ENCODE measurements at regions of chr6 and their contacts with region 1.

Region 1: GRCh38 chr6:111322153-111322552 is 160.9 kb downstream of the REV3L start:
- DNase-seq: no peak
- H3K4me3 ChIP-seq: no peak overlapping the region
- H3K4me3 Mint-ChIP-seq: no peak overlapping the region
- H3K27ac Mint-ChIP-seq: no peak overlapping the region
- H3K4me1 ChIP-seq: no peaks in the 10 kb centered on the region
- H3K4me1 Mint-ChIP-seq: no peaks in the 10 kb centered on the region
- H3K27me3 ChIP-seq: no peaks in the 10 kb centered on the region
- H3K27me3 Mint-ChIP-seq: no peaks in the 10 kb centered on the region
- CTCF ChIP-seq: no peak

Region 2: DNA sequence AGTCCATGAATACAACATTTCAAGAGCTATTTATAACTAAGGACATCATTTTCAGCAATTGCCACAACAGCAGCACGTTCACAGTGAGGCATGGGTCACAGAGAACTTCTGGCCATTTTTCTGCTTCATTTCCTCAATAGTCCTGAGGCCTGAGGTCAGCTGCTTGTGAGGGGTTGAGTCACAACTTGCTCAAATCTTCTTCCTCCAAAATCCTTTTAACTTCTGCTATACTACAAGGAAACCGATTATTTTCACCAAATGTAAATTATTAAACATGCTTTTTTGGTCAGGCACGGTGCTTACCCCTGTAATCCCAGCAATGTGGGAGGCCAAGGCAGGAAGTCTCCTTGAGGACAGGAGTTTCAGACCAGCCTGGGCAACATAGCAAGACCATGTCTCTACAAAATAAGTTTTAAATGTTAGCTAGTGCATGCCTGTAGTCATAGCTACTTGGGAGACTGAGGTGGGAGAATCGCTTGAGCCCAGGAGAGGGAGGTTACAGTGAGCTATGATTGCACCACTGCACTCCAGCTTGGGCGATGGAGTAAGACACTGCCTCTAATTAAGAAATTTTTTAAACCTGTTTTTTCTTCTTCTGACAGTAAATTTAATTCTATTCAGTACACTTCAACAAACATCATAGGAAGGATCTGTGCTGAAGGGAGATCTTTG is 246.0 kb before region 1 on chr6:
- CTCF ChIA-PET with region 1: no interaction called
- POLR2A ChIA-PET with region 1: interaction called, 10 read pairs
- intact Hi-C with region 1: no loop called
- DNase-seq: no peak
- H3K4me3 ChIP-seq: no peak overlapping the region
- H3K4me3 Mint-ChIP-seq: no peak overlapping the region
- H3K27ac Mint-ChIP-seq: no peak overlapping the region
- H3K4me1 ChIP-seq: no peaks in the 10 kb centered on the region
- H3K4me1 Mint-ChIP-seq: no peaks in the 10 kb centered on the region
- H3K27me3 ChIP-seq: no peaks in the 10 kb centered on the region; the same call in 1 of the 2 replicates
- H3K27me3 Mint-ChIP-seq: peaks cover 3% of the 10 kb centered on the region
- CTCF ChIP-seq: no peak

Region 3: GRCh38 chr6:111276338-111277119 is 45.6 kb before region 1 on chr6:
- CTCF ChIA-PET with region 1: no interaction called
- POLR2A ChIA-PET with region 1: no interaction called
- intact Hi-C with region 1: no loop called
- DNase-seq: peak; percentile 83 to 87
- H3K4me3 ChIP-seq: no peak overlapping the region
- H3K4me3 Mint-ChIP-seq: peak overlapping the region; percentile 70
- H3K27ac Mint-ChIP-seq: peak overlapping the region; percentile 92
- H3K4me1 ChIP-seq: peaks cover 43% of the 10 kb centered on the region
- H3K4me1 Mint-ChIP-seq: peaks cover 47% of the 10 kb centered on the region
- H3K27me3 ChIP-seq: no peaks in the 10 kb centered on the region
- H3K27me3 Mint-ChIP-seq: no peaks in the 10 kb centered on the region
- CTCF ChIP-seq: no peak

Region 4: DNA sequence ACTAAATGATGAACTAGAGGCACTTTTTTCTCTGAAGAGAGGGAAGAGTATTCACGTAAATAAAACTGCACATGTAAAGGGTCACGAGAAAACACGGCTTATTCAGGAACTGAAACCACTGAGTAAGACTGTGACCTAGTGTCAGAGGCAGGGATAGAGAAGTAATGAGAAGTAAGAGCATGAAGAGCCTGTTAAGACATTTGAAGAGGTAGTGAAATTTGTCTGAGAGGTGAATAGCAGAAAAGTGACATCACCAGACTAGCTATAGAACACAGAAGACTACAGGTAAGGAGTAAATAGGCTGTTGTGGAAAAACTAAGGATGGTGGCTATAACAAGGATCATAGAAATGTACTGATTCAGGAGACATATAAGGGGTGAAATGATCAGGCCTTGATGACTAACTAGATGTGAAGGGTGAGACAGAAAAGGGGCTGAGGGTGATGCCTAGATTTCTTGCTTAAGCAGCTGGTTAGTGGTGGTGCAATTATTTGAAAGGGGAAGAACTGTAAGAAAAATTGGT is 84.1 kb after region 1 on chr6:
- CTCF ChIA-PET with region 1: no interaction called
- POLR2A ChIA-PET with region 1: no interaction called
- intact Hi-C with region 1: no loop called
- DNase-seq: no peak
- H3K4me3 ChIP-seq: no peak overlapping the region
- H3K4me3 Mint-ChIP-seq: no peak overlapping the region
- H3K27ac Mint-ChIP-seq: peak overlapping the region; percentile 2
- H3K4me1 ChIP-seq: no peaks in the 10 kb centered on the region
- H3K4me1 Mint-ChIP-seq: no peaks in the 10 kb centered on the region
- H3K27me3 ChIP-seq: no peaks in the 10 kb centered on the region
- H3K27me3 Mint-ChIP-seq: no peaks in the 10 kb centered on the region
- CTCF ChIP-seq: no peak

Measured in Caco-2 (cell line).